Common myeloid progenitor, CD34-positive (primary cell): ENCODE measurements at regions of chr4 and their contacts with region 1.

Region 1: GRCh38 chr4:109977854-109978501 is 65.3 kb downstream of the EGF start:
- DNase-seq: peak; percentile 40 to 63 (median 57)
- H3K4me3 ChIP-seq: no peak overlapping the region
- H3K27ac ChIP-seq: no peak overlapping the region
- H3K4me1 ChIP-seq: peaks cover 0 to 17% (median 6%) of the 10 kb centered on the region in 4 experiments
- H3K27me3 ChIP-seq: no peaks in the 10 kb centered on the region

Region 2: DNA sequence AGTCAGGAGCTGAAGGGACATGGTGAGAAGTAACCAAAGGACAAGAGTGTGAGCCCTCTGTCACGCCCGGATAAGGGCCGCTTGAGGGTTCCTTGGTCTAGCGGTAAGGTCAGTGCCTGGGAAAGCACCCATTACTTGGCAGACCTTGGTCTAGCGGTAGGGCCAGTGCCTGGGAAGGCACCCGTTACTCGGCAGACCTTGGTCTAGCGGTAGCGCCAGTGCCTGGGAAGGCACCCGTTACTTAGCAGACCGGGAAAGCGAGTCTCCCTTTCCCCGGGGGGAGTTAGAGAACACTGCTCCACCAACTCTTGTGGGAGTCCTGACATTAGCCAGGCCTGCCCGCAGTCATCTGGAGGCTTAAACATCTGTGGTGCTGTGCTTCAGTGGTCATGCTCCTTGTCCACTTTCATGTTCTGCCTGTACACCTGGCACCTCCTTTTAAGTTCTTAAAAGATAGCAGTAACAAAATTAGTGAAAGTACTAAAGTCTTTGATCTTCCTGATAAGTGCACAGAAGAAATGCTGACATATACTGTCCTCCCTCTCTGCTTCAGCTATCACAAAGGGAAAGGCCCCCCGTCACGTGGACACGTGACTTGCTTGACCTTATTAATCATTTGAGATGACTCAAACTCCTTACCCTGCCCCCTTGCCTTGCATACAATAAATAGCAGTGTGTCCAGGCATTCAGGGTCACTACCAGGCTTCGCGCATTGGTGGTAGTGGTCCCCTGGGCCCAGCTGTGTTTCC is 553.7 kb before region 1 on chr4:
- CTCF ChIA-PET with region 1: interaction called, 21 read pairs
- POLR2A ChIA-PET with region 1: no interaction called
- DNase-seq: no peak
- H3K4me3 ChIP-seq: no peak overlapping the region
- H3K27ac ChIP-seq: no peak overlapping the region
- H3K4me1 ChIP-seq: peaks cover 0 to 2% (median 0%) of the 10 kb centered on the region in 4 experiments
- H3K27me3 ChIP-seq: no peaks in the 10 kb centered on the region

Region 3: GRCh38 chr4:109990261-109991257 is 12.6 kb after region 1 on chr4:
- CTCF ChIA-PET with region 1: interaction called, 19 read pairs
- POLR2A ChIA-PET with region 1: no interaction called
- DNase-seq: peak in 2 of 3 donors; percentile 26 to 43
- H3K4me3 ChIP-seq: no peak overlapping the region
- H3K27ac ChIP-seq: no peak overlapping the region
- H3K4me1 ChIP-seq: peaks cover 0 to 12% (median 3%) of the 10 kb centered on the region in 4 experiments
- H3K27me3 ChIP-seq: no peaks in the 10 kb centered on the region